ENCODE measurements at regions of chr6 and their contacts with region 1.

Region 1: DNA sequence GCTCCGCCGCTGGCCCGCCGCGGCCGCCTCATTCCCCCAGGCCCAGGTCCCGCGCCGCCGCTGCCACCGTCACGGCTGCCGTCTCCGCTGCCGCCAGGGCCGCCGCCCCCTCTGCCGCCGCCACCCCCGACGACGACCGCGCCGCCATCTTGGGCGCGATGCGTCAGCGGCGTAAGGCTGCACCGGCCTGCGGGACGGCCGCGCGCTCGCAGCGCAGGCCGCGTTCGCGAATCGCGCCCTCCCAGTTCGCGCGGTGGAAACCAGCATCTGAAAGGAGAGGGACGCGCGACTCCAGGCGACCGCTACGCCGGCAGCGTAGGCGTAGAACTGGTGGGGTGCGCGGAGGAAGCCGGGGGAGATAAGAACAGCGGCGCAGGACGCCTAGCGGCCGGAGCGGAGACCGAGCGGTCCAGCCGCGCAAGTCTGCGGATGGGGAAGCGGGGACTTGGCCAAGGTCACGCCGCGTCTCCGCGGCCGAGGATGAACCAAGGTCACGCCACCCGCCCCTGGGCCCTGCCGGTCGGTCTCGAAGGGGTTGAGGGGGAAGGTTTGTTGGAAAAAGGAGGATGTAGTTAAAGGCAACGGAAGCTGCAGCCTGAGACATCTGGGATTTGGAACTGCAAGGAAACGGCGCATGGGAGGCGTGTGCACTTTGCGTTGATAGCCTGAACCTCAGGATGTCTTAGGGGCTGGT is at the start of gene NUDT3:
- DNase-seq: peak; percentile 96
- ATAC-seq: peak; percentile 91 to 93
- total RNA-seq, gene NUDT3: 36.6 to 53.6 TPM

Region 2: GRCh38 chr6:34248727-34249551 is 143.7 kb before region 1 on chr6 and contains the start of gene SMIM29:
- intact Hi-C with region 1: loop called in 1 of 2 experiments (anchors 2 kb)
- DNase-seq: peak; percentile 97
- ATAC-seq: peak; percentile 92 to 94
- total RNA-seq, gene SMIM29: 18.4 to 22.7 TPM

Region 3: GRCh38 chr6:34301408-34301807 is 91.2 kb before region 1 on chr6:
- intact Hi-C with region 1: loop called in 1 of 2 experiments (anchors 5 kb)
- DNase-seq: peak; percentile 75
- ATAC-seq: peak; percentile 89 to 98

Region 4: GRCh38 chr6:34341481-34341971 is 51.1 kb before region 1 on chr6:
- intact Hi-C with region 1: loop called in 1 of 2 experiments (anchors 5 kb)
- DNase-seq: no peak
- ATAC-seq: peak; percentile 48 to 76

Measured in left cardiac atrium (tissue), 4 donors.